Activated CD4-positive, alpha-beta memory T cell treated with anti-CD3 and anti-CD28 coated beads for 36 hours (primary cell): ENCODE measurements at regions of chrX and their contacts with region 1.

Region 1: DNA sequence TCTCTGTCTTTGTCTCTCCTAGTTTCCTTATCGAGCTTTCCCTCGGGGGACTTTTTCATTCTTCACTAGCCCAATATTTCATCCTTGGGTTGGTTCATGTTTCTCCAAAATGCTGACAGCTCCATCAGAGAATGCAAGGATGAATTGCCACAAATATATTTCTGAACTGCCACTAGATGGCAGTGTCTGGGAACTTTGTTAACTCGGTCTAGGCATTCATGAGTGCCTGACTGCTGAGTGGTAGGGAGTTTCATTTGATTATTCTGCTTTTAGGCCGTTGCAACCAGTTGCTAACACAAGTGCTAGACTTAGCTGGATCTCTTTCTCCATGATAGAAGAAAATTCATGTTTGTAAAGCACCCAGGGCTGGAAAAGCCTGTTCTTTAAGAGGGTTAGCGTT is 73.5 kb upstream of the RAP2C start:
- DNase-seq: peak; percentile 9
- H3K4me3 Mint-ChIP-seq: no peak overlapping the region
- H3K27ac Mint-ChIP-seq: no peak overlapping the region
- H3K4me1 Mint-ChIP-seq: no peaks in the 10 kb centered on the region
- H3K27me3 Mint-ChIP-seq: no peaks in the 10 kb centered on the region

Region 2: DNA sequence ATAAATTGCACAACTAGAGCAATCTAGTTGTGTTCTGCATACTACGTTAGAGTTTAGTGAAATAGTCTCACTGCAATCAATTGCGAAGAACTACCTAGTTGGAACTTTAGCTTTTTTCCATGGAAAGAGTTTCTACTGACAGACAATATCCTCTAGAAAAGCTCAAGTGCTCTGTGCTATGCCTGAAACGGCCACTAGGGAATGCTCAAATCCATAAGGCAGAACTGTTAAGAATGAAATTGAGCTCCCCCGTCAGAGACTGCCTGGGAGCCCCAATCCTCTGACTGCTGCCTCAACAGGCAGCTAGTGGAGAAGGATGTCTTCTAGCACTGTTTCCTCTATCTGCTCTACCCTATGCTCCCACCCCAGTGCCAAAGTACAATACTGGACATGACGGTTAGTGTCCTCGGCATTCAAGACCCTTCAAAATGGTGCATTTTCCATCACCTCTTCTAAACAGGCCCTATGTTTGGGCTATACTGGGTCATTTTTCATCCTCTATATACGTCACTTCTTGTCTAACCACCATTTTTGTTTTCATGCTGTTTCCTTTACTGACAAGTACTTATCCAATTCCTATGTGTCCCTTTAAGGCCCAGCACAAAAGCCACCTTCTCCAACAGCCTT is 200.2 kb before region 1 on chrX:
- CTCF ChIA-PET with region 1: interaction called, 12 read pairs
- POLR2A ChIA-PET with region 1: no interaction called
- intact Hi-C with region 1: no loop called
- DNase-seq: peak; percentile 65
- H3K4me3 Mint-ChIP-seq: no peak overlapping the region
- H3K27ac Mint-ChIP-seq: no peak overlapping the region
- H3K4me1 Mint-ChIP-seq: peaks cover 3% of the 10 kb centered on the region
- H3K27me3 Mint-ChIP-seq: peaks cover 2% of the 10 kb centered on the region

Region 3: DNA sequence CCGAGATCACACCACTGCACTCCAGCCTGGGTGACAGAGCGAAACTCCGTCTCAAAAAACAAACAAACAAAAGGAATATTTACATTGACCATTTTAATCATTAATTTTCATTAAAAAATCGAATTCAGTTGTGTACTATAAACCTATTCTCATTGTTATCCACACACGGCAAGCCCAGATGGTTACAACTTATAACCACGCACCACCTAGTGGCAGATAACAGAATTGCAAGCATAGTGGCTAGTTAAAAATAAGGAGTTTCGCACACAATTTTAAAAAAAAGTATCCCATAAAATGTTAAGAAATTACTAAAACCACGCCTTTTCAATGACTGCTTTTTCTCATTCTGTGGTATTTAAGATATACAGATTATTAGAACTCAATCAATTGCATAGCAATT is 170.6 kb after region 1 on chrX:
- CTCF ChIA-PET with region 1: interaction called, 9 read pairs
- POLR2A ChIA-PET with region 1: no interaction called
- intact Hi-C with region 1: loop called (anchors 1 kb)
- DNase-seq: peak; percentile 15
- H3K4me3 Mint-ChIP-seq: no peak overlapping the region
- H3K27ac Mint-ChIP-seq: no peak overlapping the region
- H3K4me1 Mint-ChIP-seq: no peaks in the 10 kb centered on the region
- H3K27me3 Mint-ChIP-seq: no peaks in the 10 kb centered on the region

Region 4: GRCh38 chrX:132615391-132616131 is 322.8 kb after region 1 on chrX:
- CTCF ChIA-PET with region 1: interaction called, 31 read pairs
- POLR2A ChIA-PET with region 1: no interaction called
- intact Hi-C with region 1: loop called (anchors 1 kb)
- DNase-seq: peak; percentile 57
- H3K4me3 Mint-ChIP-seq: no peak overlapping the region
- H3K27ac Mint-ChIP-seq: no peak overlapping the region
- H3K4me1 Mint-ChIP-seq: no peaks in the 10 kb centered on the region
- H3K27me3 Mint-ChIP-seq: no peaks in the 10 kb centered on the region

Region 5: DNA sequence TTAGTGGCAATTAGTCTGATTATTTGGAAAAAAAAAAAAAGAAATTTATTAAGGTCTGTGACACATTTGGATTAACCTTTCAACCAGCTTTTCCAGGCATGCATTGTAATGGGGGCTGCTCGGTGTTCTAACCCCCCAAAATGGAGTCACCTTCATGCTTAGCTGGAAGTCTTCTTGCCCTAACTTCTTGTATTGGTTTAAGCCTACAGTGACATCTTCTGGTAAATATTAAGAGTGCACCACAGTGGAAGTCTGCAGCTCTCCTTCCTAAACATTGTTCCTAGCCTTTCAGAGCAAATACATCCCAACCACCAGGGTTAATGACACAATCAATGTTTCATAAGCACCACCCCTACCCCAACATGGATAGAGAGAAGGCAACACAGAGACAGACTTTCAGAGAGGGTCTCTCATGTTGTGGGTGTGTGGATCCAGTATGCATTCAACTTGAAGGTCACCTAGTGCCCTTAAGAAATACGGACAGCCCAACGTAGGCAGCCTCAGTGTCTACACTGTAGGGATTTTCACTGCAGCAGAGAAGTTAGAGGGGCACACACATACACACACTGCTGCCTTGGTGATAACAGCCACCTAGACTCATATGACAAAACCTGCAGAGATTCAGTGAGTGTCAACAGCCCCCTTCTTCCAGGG is 338.9 kb after region 1 on chrX:
- CTCF ChIA-PET with region 1: interaction called, 27 read pairs
- POLR2A ChIA-PET with region 1: no interaction called
- intact Hi-C with region 1: no loop called
- DNase-seq: no peak
- H3K4me3 Mint-ChIP-seq: no peak overlapping the region
- H3K27ac Mint-ChIP-seq: no peak overlapping the region
- H3K4me1 Mint-ChIP-seq: no peaks in the 10 kb centered on the region
- H3K27me3 Mint-ChIP-seq: no peaks in the 10 kb centered on the region